Panc1 (cell line): ENCODE measurements at regions of chr1 and their contacts with region 1.

Region 1: DNA sequence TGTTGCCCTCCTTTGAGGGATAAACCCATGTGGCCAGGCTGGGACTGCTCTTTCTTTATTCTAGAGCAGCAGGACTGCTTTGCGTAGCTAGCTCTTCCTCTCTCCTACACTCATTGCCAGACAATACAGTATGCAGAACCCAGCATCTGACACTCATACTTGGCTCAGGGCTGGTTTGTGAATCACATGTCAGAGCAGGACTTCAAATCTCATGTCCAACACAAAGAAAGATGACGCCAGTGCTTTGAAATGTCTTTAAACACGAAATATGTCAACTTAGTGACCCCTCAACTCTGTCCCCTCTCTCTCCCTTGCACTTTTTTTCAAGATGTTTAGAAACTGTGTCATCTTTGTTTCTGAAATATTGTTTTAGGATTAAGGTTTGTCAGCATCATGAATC is 135.0 kb downstream of the TGFB2 start:
- DNase-seq: no peak
- ATAC-seq: 0 out of 2 replicates have a peak, but pooled peaks have one; percentile 49
- H3K4me3 ChIP-seq: no peak overlapping the region
- H3K27ac ChIP-seq: peak overlapping the region; percentile 70; the same call in 1 of the 2 replicates
- H3K4me1 ChIP-seq: 0 out of 2 replicates have a peak, but pooled peaks cover 6% of the 10 kb centered on the region
- H3K27me3 ChIP-seq: no peaks in the 10 kb centered on the region
- CTCF ChIP-seq: no peak

Region 2: DNA sequence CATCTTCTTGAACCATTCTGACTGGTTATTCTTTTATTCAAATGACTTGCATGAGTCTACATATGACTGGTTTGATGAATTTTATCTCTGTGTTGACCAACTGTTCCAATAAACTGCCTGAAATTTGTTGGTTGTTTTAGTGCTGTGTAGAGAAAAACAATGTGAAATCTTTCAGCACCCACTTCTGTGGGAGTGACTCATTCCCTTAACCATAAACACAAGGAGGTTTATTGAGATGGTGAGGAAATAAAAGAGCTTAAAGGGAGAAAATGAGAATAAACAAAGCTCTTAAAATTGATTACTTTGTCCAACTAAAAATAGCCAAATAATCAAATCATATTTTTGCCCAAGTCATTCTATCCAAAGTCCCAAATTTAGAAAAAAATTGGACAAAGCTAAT is 206.1 kb after region 1 on chr1:
- CTCF ChIA-PET with region 1: no interaction called
- POLR2A ChIA-PET with region 1: no interaction called
- in situ Hi-C with region 1: no loop called
- intact Hi-C with region 1: no loop called
- DNase-seq: no peak
- ATAC-seq: 0 out of 2 replicates have a peak, but pooled peaks have one; percentile 63
- H3K4me3 ChIP-seq: no peak overlapping the region
- H3K27ac ChIP-seq: peak overlapping the region; percentile 13; the same call in 1 of the 2 replicates
- H3K4me1 ChIP-seq: no peaks in the 10 kb centered on the region
- H3K27me3 ChIP-seq: no peaks in the 10 kb centered on the region
- CTCF ChIP-seq: no peak

Region 3: GRCh38 chr1:219660666-219661463 is 1180.7 kb after region 1 on chr1:
- CTCF ChIA-PET with region 1: no interaction called
- POLR2A ChIA-PET with region 1: no interaction called
- in situ Hi-C with region 1: no loop called
- intact Hi-C with region 1: loop called (anchors 10 kb)
- DNase-seq: peak; percentile 71
- ATAC-seq: peak; percentile 96
- H3K4me3 ChIP-seq: peak overlapping the region in 1 of 2 experiments; percentile 26; a peak in 2 of 4 replicates
- H3K27ac ChIP-seq: no peak overlapping the region
- H3K4me1 ChIP-seq: no peaks in the 10 kb centered on the region
- H3K27me3 ChIP-seq: no peaks in the 10 kb centered on the region; the same call in 1 of the 2 replicates
- CTCF ChIP-seq: peak; percentile 95